ENCODE measurements at regions of chr18 and their contacts with region 1.

Region 1: DNA sequence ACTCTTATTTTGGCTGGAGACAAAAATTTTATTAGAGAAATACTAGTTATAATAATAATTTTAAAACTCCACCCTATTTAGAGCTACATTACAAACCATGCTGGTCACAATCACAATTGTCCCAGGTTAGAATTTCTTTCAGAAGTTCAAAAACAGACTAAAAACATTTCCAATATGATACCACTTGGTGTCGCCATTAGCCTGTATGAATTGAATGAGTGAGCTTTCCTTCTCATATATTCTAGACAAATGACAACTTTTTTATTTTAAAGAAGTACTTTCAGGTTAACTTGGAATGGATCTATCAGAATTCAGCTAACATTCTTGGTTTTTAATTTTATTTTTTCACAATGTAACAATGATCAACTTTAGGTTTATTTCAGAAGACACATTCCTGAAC is 48.0 kb downstream of the SERPINB8 start:
- DNase-seq: peak in 1 of 2 experiments; percentile 2
- H3K4me3 ChIP-seq: no peak overlapping the region
- H3K4me3 Mint-ChIP-seq: no peak overlapping the region
- H3K27ac Mint-ChIP-seq: no peak overlapping the region
- H3K4me1 ChIP-seq: no peaks in the 10 kb centered on the region
- H3K4me1 Mint-ChIP-seq: no peaks in the 10 kb centered on the region
- H3K27me3 ChIP-seq: no peaks in the 10 kb centered on the region
- H3K27me3 Mint-ChIP-seq: peaks cover 21% of the 10 kb centered on the region
- CTCF ChIP-seq: no peak

Region 2: GRCh38 chr18:64055019-64055418 is 37.1 kb after region 1 on chr18:
- CTCF ChIA-PET with region 1: no interaction called
- POLR2A ChIA-PET with region 1: interaction called, 12 read pairs
- intact Hi-C with region 1: no loop called
- DNase-seq: no peak
- H3K4me3 ChIP-seq: no peak overlapping the region
- H3K4me3 Mint-ChIP-seq: no peak overlapping the region
- H3K27ac Mint-ChIP-seq: no peak overlapping the region
- H3K4me1 ChIP-seq: no peaks in the 10 kb centered on the region
- H3K4me1 Mint-ChIP-seq: no peaks in the 10 kb centered on the region
- H3K27me3 ChIP-seq: no peaks in the 10 kb centered on the region
- H3K27me3 Mint-ChIP-seq: no peaks in the 10 kb centered on the region
- CTCF ChIP-seq: no peak

Region 3: GRCh38 chr18:65091744-65092329 is 1074.0 kb after region 1 on chr18:
- CTCF ChIA-PET with region 1: no interaction called
- POLR2A ChIA-PET with region 1: no interaction called
- intact Hi-C with region 1: loop called (anchors 5 kb)
- DNase-seq: peak in 1 of 2 experiments; percentile 2
- H3K4me3 ChIP-seq: no peak overlapping the region
- H3K4me3 Mint-ChIP-seq: no peak overlapping the region
- H3K27ac Mint-ChIP-seq: no peak overlapping the region
- H3K4me1 ChIP-seq: no peaks in the 10 kb centered on the region
- H3K4me1 Mint-ChIP-seq: no peaks in the 10 kb centered on the region
- H3K27me3 ChIP-seq: no peaks in the 10 kb centered on the region
- H3K27me3 Mint-ChIP-seq: no peaks in the 10 kb centered on the region
- CTCF ChIP-seq: peak in 1 of 2 experiments; percentile 48

Measured in Caco-2 (cell line).